Activated CD4-positive, alpha-beta T cell treated with anti-CD3 and anti-CD28 coated beads for 36 hours (primary cell): ENCODE measurements at regions of chr18 and their contacts with region 1.

Region 1: GRCh38 chr18:34661464-34662111 is 48.5 kb upstream of the DTNA start:
- DNase-seq: no peak
- ATAC-seq: peak; percentile 42
- H3K4me3 Mint-ChIP-seq: no peak overlapping the region
- H3K27ac Mint-ChIP-seq: no peak overlapping the region
- H3K4me1 Mint-ChIP-seq: no peaks in the 10 kb centered on the region
- H3K27me3 Mint-ChIP-seq: peaks cover 24% of the 10 kb centered on the region

Region 2: GRCh38 chr18:34444622-34445021 is 217.0 kb before region 1 on chr18:
- CTCF ChIA-PET with region 1: no interaction called
- POLR2A ChIA-PET with region 1: no interaction called
- intact Hi-C with region 1: no loop called
- DNase-seq: no peak
- ATAC-seq: no peak
- H3K4me3 Mint-ChIP-seq: no peak overlapping the region
- H3K27ac Mint-ChIP-seq: no peak overlapping the region
- H3K4me1 Mint-ChIP-seq: no peaks in the 10 kb centered on the region
- H3K27me3 Mint-ChIP-seq: no peaks in the 10 kb centered on the region

Region 3: DNA sequence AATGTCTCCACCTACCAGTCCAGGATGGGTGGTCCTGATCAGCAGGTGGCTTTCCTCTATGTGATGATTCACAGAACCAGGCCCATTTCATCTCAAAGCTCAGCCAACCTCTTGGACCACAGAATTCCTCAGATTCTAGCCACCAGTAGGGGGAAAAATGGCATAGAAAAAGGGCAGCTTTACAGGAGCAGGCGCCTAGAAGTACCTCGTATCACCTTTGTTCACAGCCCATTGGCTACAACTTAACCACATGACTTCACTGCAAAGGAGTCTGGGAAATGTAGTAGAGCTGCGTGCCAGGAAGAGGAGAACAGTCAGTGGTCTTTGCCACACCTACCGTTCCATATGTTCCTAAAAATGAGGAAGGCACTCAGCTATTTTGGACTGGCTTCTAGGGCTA is 14.3 kb before region 1 on chr18:
- CTCF ChIA-PET with region 1: interaction called, 15 read pairs
- POLR2A ChIA-PET with region 1: no interaction called
- intact Hi-C with region 1: no loop called
- DNase-seq: no peak
- ATAC-seq: no peak
- H3K4me3 Mint-ChIP-seq: no peak overlapping the region
- H3K27ac Mint-ChIP-seq: no peak overlapping the region
- H3K4me1 Mint-ChIP-seq: no peaks in the 10 kb centered on the region
- H3K27me3 Mint-ChIP-seq: peaks cover 11% of the 10 kb centered on the region

Region 4: GRCh38 chr18:34676816-34677574 is 15.4 kb after region 1 on chr18:
- CTCF ChIA-PET with region 1: interaction called, 12 read pairs
- POLR2A ChIA-PET with region 1: no interaction called
- intact Hi-C with region 1: no loop called
- DNase-seq: no peak
- ATAC-seq: no peak
- H3K4me3 Mint-ChIP-seq: no peak overlapping the region
- H3K27ac Mint-ChIP-seq: no peak overlapping the region
- H3K4me1 Mint-ChIP-seq: no peaks in the 10 kb centered on the region
- H3K27me3 Mint-ChIP-seq: peaks cover 6% of the 10 kb centered on the region

Region 5: GRCh38 chr18:34901299-34901698 is 239.7 kb after region 1 on chr18:
- CTCF ChIA-PET with region 1: no interaction called
- POLR2A ChIA-PET with region 1: no interaction called
- intact Hi-C with region 1: loop called in 1 of 2 experiments (anchors 5 kb)
- DNase-seq: no peak
- ATAC-seq: no peak
- H3K4me3 Mint-ChIP-seq: no peak overlapping the region
- H3K27ac Mint-ChIP-seq: no peak overlapping the region
- H3K4me1 Mint-ChIP-seq: peaks cover 8% of the 10 kb centered on the region
- H3K27me3 Mint-ChIP-seq: peaks cover 2% of the 10 kb centered on the region